Psoas muscle (tissue), 8 donors: ENCODE measurements at regions of chr12 and their contacts with region 1.

Region 1: DNA sequence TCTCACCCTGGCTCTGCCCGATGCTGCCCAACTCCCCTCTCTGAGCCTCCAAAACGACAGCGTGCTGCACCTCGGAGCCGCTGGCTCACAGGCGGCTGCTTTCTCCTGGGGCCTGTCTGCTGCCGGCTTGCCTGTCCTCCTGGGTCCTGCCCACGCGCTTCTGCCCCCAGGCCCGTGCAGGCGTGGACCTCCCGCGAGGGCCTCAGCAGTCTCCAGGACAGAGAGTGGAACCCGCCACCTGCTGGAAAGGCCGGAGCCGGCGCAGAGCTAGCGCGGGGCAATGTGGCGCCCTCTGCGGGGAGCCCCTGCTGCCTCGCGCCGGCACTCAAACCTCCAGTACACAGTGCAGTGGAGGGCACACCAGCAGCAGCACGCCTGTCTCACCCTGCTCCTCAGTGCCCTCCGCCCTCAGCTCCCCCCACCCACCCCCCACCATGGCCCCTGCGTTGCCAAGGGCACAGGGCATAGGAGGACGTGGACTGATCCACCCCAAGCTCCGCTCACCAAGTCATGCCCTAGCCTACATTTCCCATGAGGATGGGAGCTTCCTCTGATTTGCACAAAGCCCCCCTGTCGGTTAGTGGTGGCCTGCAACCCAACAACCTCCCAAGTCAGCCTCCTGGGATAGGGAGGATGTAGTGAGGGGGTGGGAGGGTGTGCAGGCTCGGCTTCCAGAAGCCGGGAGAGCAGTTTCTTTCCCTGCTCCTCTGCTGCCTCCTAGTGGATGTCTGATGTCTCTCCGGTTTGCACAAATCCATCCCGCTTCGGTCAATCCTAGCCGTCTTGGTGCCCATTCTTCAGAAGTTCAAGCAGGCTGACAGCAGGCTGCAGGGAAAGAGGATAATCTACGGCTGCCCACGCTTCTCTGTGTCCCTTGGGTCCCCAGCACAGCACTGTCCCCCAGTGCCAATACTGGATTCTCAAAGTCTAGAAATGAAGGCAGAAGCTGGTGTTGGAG is 25.2 kb downstream of the KRT8 start:
- DNase-seq: peak; percentile 66 to 79
- ATAC-seq: peak; percentile 80 to 90 (median 84)
- H3K4me3 ChIP-seq: peak overlapping the region; percentile 33
- H3K27ac ChIP-seq: no peak overlapping the region
- H3K4me1 ChIP-seq: peaks cover 4% of the 10 kb centered on the region
- H3K27me3 ChIP-seq: peaks cover 0 to 14% (median 0%) of the 10 kb centered on the region in 3 donors
- CTCF ChIP-seq: peak; percentile 80

Region 2: GRCh38 chr12:52032804-52033502 is 846.7 kb before region 1 on chr12:
- intact Hi-C with region 1: no loop called
- DNase-seq: peak; percentile 98 to 99
- ATAC-seq: peak; percentile 92 to 96 (median 92)
- H3K4me3 ChIP-seq: peak overlapping the region; percentile 60
- H3K27ac ChIP-seq: peak overlapping the region; percentile 93
- H3K4me1 ChIP-seq: peaks cover 45% of the 10 kb centered on the region
- H3K27me3 ChIP-seq: no peaks in the 10 kb centered on the region
- CTCF ChIP-seq: no peak

Region 3: GRCh38 chr12:52372216-52373154 is 507.2 kb before region 1 on chr12:
- intact Hi-C with region 1: loop called (anchors 2 to 10 kb)
- DNase-seq: peak; percentile 75 to 86
- ATAC-seq: peak; percentile 52 to 84 (median 80)
- H3K4me3 ChIP-seq: no peak overlapping the region
- H3K27ac ChIP-seq: no peak overlapping the region
- H3K4me1 ChIP-seq: no peaks in the 10 kb centered on the region
- H3K27me3 ChIP-seq: peaks cover 0 to 5% (median 2%) of the 10 kb centered on the region in 3 donors
- CTCF ChIP-seq: peak; percentile 60

Region 4: DNA sequence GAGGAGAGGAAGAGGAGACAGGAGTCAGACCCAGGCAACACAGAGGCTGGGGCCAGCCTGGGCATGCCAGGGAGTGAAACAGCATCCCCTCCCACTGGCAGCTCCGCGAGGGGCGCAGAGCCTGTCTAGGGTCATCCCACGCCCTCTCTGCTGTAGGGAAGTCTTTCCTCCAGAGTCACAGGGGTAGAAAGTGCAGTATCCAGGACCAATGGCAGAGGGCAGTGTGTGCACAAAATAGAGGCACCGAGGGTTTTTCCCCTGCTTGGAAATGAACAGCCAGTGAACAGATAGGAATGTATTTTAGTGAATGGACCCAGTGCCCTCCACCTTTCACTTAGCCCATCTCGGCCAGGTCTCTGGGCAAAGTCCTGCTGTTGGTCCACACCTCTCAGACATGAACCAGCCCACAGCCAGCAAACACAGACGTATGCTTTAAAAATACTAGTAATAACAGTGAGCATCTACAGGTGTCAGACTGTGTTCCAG is 296.7 kb before region 1 on chr12:
- intact Hi-C with region 1: loop called (anchors 1 to 10 kb)
- DNase-seq: peak in 1 of 2 donors; percentile 16
- ATAC-seq: peak in 3 of 4 donors; percentile 46 to 61 (median 49)
- H3K4me3 ChIP-seq: no peak overlapping the region
- H3K27ac ChIP-seq: no peak overlapping the region
- H3K4me1 ChIP-seq: no peaks in the 10 kb centered on the region
- H3K27me3 ChIP-seq: peaks cover 0 to 4% (median 0%) of the 10 kb centered on the region in 3 donors
- CTCF ChIP-seq: peak; percentile 51